HAP-1 (cell line): ENCODE measurements at regions of chr18 and their contacts with region 1.

Region 1: GRCh38 chr18:76892832-76893231 is 70.5 kb downstream of the ZNF236 start:
- DNase-seq: no peak
- H3K4me3 ChIP-seq: no peak overlapping the region
- H3K4me1 ChIP-seq: no peaks in the 10 kb centered on the region
- H3K27me3 ChIP-seq: no peaks in the 10 kb centered on the region

Region 2: GRCh38 chr18:76953583-76954233 is 60.9 kb after region 1 on chr18:
- in situ Hi-C with region 1: loop called (anchors 10 kb)
- DNase-seq: no peak
- H3K4me3 ChIP-seq: no peak overlapping the region
- H3K4me1 ChIP-seq: no peaks in the 10 kb centered on the region
- H3K27me3 ChIP-seq: no peaks in the 10 kb centered on the region